ENCODE measurements at regions of chr20 and their contacts with region 1.

Region 1: DNA sequence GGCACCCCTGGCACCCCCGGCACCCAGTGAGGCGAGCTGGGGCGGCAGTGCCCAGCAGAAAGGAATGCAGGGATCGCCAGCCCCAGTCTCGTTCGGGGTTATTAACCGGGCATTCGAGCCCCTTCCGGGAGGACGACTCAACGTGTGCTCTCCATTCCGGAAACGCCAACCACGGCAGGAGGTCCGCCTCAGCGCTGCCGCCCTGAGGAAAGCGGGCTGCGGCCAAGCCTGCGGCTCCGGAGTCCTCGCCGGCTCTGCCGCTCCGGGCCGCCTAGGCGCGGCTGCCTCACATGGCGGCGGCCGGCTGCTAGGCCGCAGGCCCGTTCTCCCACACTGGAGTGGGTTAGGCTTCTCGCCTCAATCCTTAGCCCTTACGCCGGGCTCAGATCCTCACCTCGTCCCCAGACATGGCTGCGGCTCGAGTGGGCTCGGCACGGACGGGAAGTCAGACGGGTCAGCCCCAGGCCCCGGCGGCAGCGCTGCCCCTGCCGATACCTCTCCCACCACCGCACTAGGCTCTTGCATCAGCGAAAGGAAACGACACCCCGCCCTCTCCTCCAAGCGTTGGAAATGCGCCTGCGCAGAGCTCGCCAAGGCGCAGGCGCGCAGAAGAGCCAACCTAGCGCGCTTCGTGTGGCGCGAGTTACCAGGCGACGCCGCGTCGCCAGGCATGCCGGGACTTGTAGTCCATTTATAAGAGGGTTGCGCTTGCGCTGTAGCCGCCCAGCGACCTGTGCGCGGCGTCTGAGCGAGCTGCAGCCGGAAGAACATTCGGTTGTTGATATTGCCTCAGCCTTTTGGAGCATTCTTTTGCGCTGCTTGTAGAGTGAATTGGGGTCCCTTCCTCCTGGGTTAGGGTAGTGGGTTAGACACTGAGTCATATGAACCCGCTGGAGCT is at the start of gene EIF2S2:
- DNase-seq: peak; percentile 88 to 97 (median 95)
- ATAC-seq: peak; percentile 95
- H3K4me3 ChIP-seq: peak within 1 kb of the TSS; percentile 92
- H3K4me3 Mint-ChIP-seq: peak within 1 kb of the TSS; percentile 87 to 98 (median 96)
- H3K27ac ChIP-seq: peak within 1 kb of the TSS; percentile 89
- H3K27ac Mint-ChIP-seq: peak within 1 kb of the TSS; percentile 96 to 99 (median 98)
- H3K4me1 ChIP-seq: peaks cover 24 to 34% of the 10 kb centered on the region in 2 donors
- H3K4me1 Mint-ChIP-seq: peaks cover 34 to 53% (median 47%) of the 10 kb centered on the region in 7 donors
- H3K27me3 ChIP-seq: no peaks in the 10 kb centered on the region
- H3K27me3 Mint-ChIP-seq: peaks cover 0 to 15% (median 0%) of the 10 kb centered on the region in 5 donors
- total RNA-seq, gene EIF2S2: 16.8 to 68.4 (median 48.6) TPM

Region 2: DNA sequence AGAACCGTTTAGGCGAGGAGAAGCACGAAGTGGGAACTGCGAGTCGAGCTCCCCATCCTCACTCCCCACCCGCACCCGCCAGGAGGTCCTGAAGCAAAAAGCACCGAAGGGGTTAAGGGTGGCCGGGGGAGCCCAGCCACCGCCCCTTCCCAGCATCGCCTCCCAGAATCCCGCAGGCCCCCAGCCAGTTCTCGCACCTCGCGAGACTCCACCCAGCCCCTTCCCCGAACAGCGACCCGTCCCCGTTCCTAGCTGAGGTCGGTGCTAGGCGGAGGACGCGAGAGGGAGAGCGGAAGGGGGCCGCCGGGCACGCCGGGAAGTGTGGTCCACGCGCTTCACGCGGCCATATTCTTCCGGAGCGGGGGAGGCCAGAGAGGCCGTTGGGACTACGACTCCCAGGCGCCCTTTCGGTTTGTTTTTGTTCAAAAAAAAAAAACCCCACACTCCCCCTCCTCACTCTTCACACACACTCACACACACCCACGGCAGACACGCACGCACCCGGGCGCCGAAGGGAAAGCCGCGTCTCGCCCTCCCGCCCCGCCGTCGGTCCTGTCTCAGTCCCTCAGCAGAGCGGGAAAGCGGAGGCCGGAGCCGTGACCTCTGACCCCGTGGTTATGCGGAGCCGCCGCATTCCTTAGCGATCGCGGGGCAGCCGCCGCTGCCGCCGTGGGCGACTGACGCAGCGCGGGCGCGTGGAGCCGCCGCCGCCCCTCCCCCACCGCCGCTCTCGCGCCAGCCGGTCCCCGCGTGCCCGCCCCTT is 1753.9 kb before region 1 on chr20 and contains the start of gene ASXL1:
- CTCF ChIA-PET with region 1: no interaction called
- POLR2A ChIA-PET with region 1: no interaction called
- intact Hi-C with region 1: loop called (anchors 2 to 5 kb)
- DNase-seq: peak; percentile 81 to 96 (median 95)
- ATAC-seq: peak; percentile 94
- H3K4me3 ChIP-seq: peak within 1 kb of the TSS; percentile 95
- H3K4me3 Mint-ChIP-seq: peak within 1 kb of the TSS; percentile 87 to 99 (median 96)
- H3K27ac ChIP-seq: peak within 1 kb of the TSS; percentile 98
- H3K27ac Mint-ChIP-seq: peak within 1 kb of the TSS; percentile 97 to 100 (median 99)
- H3K4me1 ChIP-seq: peaks cover 10 to 27% of the 10 kb centered on the region in 2 donors
- H3K4me1 Mint-ChIP-seq: peaks cover 38 to 65% (median 45%) of the 10 kb centered on the region in 7 donors
- H3K27me3 ChIP-seq: no peaks in the 10 kb centered on the region
- H3K27me3 Mint-ChIP-seq: no peaks in the 10 kb centered on the region
- total RNA-seq, gene ASXL1: 106 to 200 (median 158) TPM

Region 3: GRCh38 chr20:33489495-33490022 is 622.4 kb before region 1 on chr20:
- CTCF ChIA-PET with region 1: no interaction called
- POLR2A ChIA-PET with region 1: interaction called, 12 read pairs
- intact Hi-C with region 1: loop called in 1 of 2 experiments (anchors 1 kb)
- DNase-seq: peak; percentile 97 to 99 (median 99)
- ATAC-seq: peak; percentile 97
- H3K4me3 ChIP-seq: peak overlapping the region; percentile 75
- H3K4me3 Mint-ChIP-seq: peak overlapping the region; percentile 84 to 95 (median 88)
- H3K27ac ChIP-seq: peak overlapping the region; percentile 94
- H3K27ac Mint-ChIP-seq: peak overlapping the region; percentile 86 to 96 (median 90)
- H3K4me1 ChIP-seq: peaks cover 4 to 9% of the 10 kb centered on the region in 2 donors
- H3K4me1 Mint-ChIP-seq: peaks cover 0 to 30% (median 13%) of the 10 kb centered on the region in 7 donors
- H3K27me3 ChIP-seq: no peaks in the 10 kb centered on the region
- H3K27me3 Mint-ChIP-seq: no peaks in the 10 kb centered on the region

Region 4: GRCh38 chr20:33674295-33675135 is 437.4 kb before region 1 on chr20 and contains the start of gene NECAB3:
- CTCF ChIA-PET with region 1: no interaction called
- POLR2A ChIA-PET with region 1: no interaction called
- intact Hi-C with region 1: loop called (anchors 5 kb)
- DNase-seq: peak in 6 of 9 donors; percentile 27 to 83 (median 39)
- ATAC-seq: peak; percentile 89
- H3K4me3 ChIP-seq: peak within 1 kb of the TSS; percentile 58
- H3K4me3 Mint-ChIP-seq: peak within 1 kb of the TSS; percentile 85 to 95 (median 87)
- H3K27ac ChIP-seq: peak within 1 kb of the TSS; percentile 54
- H3K27ac Mint-ChIP-seq: peak within 1 kb of the TSS; percentile 33 to 90 (median 80)
- H3K4me1 ChIP-seq: peaks cover 15 to 38% of the 10 kb centered on the region in 2 donors
- H3K4me1 Mint-ChIP-seq: peaks cover 30 to 69% (median 47%) of the 10 kb centered on the region in 7 donors
- H3K27me3 ChIP-seq: no peaks in the 10 kb centered on the region
- H3K27me3 Mint-ChIP-seq: no peaks in the 10 kb centered on the region
- total RNA-seq, gene NECAB3: 10.8 to 46.8 (median 16.3) TPM

Region 5: DNA sequence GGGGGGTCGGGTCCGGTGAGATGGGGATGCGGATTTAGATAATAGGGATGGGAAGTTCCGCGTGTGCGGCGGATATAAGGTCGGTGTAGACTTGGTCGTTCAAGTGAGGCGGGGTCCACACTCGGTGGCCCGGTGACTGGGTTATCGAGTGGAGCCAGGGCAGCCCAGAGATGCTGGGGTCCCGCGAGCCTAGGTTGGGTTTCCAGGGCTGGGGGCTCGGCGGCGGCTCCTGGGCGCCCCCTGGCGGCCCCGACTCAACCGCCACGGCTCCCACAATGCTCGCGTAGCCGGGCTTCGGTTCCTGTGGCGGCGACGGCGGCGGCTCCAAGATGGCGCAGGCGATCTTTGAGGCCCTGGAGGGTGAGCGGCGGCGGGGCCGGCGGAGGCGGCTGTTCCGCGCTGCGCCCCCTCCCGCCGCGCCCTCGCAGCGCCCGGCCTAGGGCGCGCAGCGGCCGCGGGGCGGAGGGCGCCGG is 380.2 kb before region 1 on chr20 and contains the start of gene ZNF341:
- CTCF ChIA-PET with region 1: no interaction called
- POLR2A ChIA-PET with region 1: interaction called, 6 read pairs
- intact Hi-C with region 1: loop called (anchors 5 kb)
- DNase-seq: peak in 7 of 9 donors; percentile 84 to 92 (median 88)
- ATAC-seq: peak; percentile 92
- H3K4me3 ChIP-seq: peak within 1 kb of the TSS; percentile 84
- H3K4me3 Mint-ChIP-seq: peak within 1 kb of the TSS; percentile 82 to 97 (median 90)
- H3K27ac ChIP-seq: peak within 1 kb of the TSS; percentile 75
- H3K27ac Mint-ChIP-seq: peak within 1 kb of the TSS; percentile 90 to 98 (median 97)
- H3K4me1 ChIP-seq: peaks cover 3 to 18% of the 10 kb centered on the region in 2 donors
- H3K4me1 Mint-ChIP-seq: peaks cover 12 to 36% (median 20%) of the 10 kb centered on the region in 7 donors
- H3K27me3 ChIP-seq: no peaks in the 10 kb centered on the region
- H3K27me3 Mint-ChIP-seq: peaks cover 0 to 3% (median 0%) of the 10 kb centered on the region in 5 donors
- total RNA-seq, gene ZNF341: 3.5 to 6.1 (median 5.5) TPM

Region 6: DNA sequence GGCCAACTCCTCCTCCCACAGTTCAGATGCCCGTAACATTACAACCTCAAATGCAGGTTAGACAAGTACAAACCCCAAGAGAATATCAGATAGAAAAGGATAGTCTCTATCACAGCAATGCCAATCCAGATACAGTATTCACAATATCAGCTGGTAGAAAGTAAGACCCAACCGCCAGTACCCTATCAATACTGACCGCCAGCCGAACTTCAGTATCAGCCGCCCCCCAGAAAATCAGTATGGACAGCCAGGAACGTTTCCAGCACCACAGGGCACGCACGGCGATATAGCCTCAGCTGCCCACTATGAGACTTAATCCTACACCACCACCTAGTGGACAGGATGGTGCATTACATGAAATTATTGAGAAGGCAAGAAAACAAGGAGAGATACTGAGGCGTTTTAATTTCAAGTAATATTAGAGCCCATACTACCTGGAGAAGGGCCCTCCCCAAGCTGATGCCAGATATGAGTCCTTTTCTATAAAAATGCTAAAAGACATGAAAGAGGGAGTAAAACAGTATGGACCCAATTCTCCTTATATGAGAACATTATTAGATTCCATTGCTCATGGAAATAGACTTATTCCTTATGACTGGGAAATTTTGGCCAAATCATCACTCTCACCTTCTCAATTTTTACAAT is 17.7 kb after region 1 on chr20:
- CTCF ChIA-PET with region 1: no interaction called
- POLR2A ChIA-PET with region 1: interaction called, 5 read pairs
- intact Hi-C with region 1: loop called (anchors 1 kb)
- DNase-seq: peak; percentile 36 to 79 (median 67)
- ATAC-seq: peak; percentile 99
- H3K4me3 ChIP-seq: no peak overlapping the region
- H3K4me3 Mint-ChIP-seq: peak overlapping the region in 8 of 10 donors; percentile 18 to 73 (median 46)
- H3K27ac ChIP-seq: no peak overlapping the region
- H3K27ac Mint-ChIP-seq: no peak overlapping the region
- H3K4me1 ChIP-seq: no peaks in the 10 kb centered on the region
- H3K4me1 Mint-ChIP-seq: peaks cover 0 to 8% (median 4%) of the 10 kb centered on the region in 7 donors
- H3K27me3 ChIP-seq: no peaks in the 10 kb centered on the region
- H3K27me3 Mint-ChIP-seq: peaks cover 0 to 23% (median 7%) of the 10 kb centered on the region in 5 donors

Region 7: GRCh38 chr20:34676642-34677373 is 564.9 kb after region 1 on chr20 and contains the start of gene PIGU:
- CTCF ChIA-PET with region 1: no interaction called
- POLR2A ChIA-PET with region 1: interaction called, 8 read pairs
- intact Hi-C with region 1: loop called in 1 of 2 experiments (anchors 1 kb)
- DNase-seq: peak; percentile 88 to 97 (median 96)
- ATAC-seq: peak; percentile 99
- H3K4me3 ChIP-seq: peak within 1 kb of the TSS; percentile 63
- H3K4me3 Mint-ChIP-seq: peak within 1 kb of the TSS; percentile 95 to 99 (median 96)
- H3K27ac ChIP-seq: peak within 1 kb of the TSS; percentile 95
- H3K27ac Mint-ChIP-seq: peak within 1 kb of the TSS; percentile 85 to 98 (median 97)
- H3K4me1 ChIP-seq: peaks cover 4 to 5% of the 10 kb centered on the region in 2 donors
- H3K4me1 Mint-ChIP-seq: peaks cover 14 to 37% (median 24%) of the 10 kb centered on the region in 7 donors
- H3K27me3 ChIP-seq: no peaks in the 10 kb centered on the region
- H3K27me3 Mint-ChIP-seq: no peaks in the 10 kb centered on the region
- total RNA-seq, gene PIGU: 8.6 to 21.3 (median 16.1) TPM

Measured in naive thymus-derived CD4-positive, alpha-beta T cell (primary cell).